Head of caudate nucleus (tissue), 42 donors: ENCODE measurements at regions of chr17 and their contacts with region 1.

Region 1: DNA sequence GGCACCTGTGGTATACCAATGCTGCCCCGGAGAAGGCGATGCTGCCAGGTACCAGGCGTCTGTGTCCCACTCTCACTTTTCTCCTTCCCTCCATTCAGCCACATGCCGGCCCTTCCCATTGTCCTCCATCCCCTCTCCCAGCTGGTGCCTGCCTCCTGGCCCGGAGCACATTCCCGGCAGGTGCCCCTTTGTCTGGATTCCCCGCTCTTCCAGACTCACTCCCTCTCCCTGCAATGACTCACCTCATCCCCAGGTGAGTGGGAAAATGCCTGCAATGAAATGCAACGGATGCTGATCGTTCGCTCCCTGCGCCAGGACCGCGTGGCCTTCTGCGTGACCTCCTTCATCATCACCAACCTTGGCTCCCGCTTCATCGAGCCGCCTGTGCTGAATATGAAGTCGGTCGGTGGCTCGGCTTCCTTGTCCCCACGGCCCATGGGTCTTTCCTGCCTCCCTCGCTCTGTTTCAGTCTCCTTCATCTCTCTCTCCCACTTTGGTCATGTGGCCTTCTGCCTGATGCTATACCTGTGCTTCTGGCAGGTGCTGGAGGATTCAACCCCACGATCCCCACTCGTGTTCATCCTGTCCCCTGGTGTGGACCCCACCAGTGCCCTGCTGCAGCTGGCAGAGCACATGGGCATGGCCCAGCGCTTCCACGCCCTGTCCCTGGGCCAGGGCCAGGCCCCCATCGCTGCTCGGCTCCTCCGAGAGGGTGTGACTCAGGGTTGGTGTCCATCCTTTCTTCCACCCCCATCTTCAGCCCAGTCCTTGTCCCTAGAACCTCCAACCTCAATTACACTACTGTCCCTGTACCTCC is 10.2 kb upstream of the KDM6B start:
- DNase-seq: peak in 39 of 42 donors; percentile 24 to 74 (median 42)

Region 2: DNA sequence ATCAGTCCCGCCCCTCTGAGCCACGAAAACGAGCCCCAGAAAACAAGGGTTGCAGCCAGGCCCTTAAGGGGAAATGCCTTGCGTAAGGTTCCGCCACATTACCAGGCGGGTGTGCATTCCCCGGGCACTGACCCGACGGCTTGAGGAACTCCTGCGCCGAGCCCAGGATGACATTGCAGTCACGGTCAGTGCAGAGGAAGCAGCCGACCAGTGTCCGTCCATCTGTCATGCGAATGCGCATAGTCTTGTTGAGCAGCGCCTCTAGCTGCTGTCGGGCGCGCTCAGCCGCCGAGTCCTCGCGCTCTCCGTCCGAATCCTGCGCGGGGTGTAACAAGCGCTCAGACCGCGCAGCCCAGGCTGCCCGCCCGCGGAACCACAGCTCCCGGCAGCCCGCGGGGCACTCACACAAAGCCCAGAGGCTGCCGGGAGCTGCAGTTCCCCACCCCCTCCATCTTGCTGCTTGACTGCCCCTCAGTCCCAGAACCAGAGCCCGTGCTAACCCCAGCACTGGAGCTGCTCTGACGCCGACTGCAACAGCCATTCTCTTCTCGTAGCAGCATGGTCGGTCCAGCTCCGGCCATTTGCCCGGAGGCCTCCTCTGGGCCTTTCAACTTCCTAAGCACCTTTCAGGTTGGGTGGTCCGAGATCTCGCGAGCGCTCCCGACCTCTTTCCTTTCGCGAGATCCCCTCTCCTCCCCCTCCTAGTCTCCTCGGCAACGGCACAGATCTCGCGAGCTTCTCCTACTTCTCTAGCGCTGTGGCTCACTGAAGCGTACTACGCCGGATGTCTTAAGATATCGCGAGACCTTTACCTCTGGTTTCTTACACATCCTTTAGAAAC is 33.3 kb after region 1 on chr17 and contains the start of gene NAA38:
- intact Hi-C with region 1: loop called (anchors 5 kb)
- DNase-seq: peak; percentile 90 to 99 (median 97)

Region 3: GRCh38 chr17:7931709-7932482 is 108.1 kb after region 1 on chr17 and contains the starts of genes CNTROB and TRAPPC1:
- intact Hi-C with region 1: no loop called
- DNase-seq: peak; percentile 98 to 100 (median 100)

Region 4: DNA sequence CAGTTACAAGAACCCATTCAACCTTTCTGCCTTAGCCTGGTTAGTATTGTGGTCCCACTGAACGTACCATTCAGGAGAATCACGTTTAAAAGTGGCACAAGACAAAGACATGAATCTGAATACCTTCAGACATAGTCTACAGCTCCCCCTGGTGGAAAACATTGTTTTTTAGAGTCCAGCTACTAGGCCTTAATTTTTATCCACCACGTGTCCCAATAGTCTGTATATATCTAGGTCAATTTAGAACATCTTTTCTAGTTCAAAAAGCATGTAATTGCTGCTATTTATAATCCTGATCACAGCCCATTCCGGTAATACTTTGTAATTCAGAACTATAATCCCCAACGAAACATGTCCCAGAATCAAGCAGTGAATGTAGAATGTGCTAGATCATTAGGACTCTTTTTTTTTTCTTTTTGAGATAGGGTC is 165.0 kb after region 1 on chr17:
- intact Hi-C with region 1: no loop called
- DNase-seq: peak in 17 of 42 donors; percentile 25 to 84 (median 61)

Region 5: DNA sequence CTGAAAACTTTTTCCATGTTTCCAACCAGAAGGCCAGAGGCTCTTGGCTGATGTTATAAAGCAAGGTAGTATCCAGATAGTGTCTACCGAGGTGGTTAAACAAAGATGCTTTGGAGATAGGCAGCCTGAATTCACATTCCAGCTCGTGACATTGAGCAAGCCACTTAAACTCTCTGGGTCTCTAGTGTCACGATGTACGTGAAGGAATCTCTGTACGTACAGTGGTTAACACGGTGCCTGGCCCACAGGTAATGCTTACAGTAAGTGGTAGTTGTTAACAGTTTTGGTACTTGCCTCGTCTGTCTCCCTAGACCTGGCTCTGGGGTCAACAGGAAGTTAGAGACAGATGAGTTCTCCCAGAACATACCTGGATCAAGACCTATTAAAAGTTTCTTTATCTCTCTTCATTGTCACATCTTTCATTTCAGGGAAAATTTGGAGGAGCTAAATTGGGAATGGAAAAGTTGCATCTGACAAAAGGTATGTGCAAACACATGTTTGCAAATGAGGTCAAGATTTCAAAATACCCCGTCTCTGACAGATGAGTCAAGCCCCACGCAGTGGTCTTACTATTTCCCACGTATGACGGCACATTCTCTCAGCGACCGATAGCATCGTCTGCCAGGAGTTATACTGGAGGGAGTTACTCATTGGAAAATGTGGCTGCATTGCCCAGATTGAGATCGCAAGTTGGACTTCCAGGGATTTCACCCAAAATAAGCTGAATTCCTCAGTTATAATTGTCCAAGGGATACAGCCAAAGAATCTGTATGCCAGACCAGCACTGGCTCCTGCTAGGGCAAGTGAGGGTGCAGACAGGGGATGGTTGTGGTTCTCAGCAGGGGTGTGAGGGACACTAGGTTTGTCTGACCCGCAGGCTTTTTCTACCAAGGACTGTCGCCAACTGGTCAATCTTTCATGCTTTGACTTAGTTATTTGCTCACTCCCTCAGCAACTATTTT is 825.6 kb after region 1 on chr17:
- intact Hi-C with region 1: no loop called
- DNase-seq: no peak